Vagina (tissue), 2 donors: ENCODE measurements at regions of chr4 and their contacts with region 1.

Region 1: GRCh38 chr4:86472377-86473019 is 112.6 kb upstream of the MAPK10 start:
- DNase-seq: no peak
- H3K4me3 ChIP-seq: no peak overlapping the region
- H3K27ac ChIP-seq: peak overlapping the region; percentile 16
- H3K4me1 ChIP-seq: no peaks in the 10 kb centered on the region
- H3K27me3 ChIP-seq: no peaks in the 10 kb centered on the region
- CTCF ChIP-seq: no peak
- POLR2A ChIP-seq: no peak

Region 2: GRCh38 chr4:84792366-84793301 is 1679.9 kb before region 1 on chr4:
- intact Hi-C with region 1: loop called (anchors 5 kb)
- DNase-seq: no peak
- H3K4me3 ChIP-seq: no peak overlapping the region
- H3K27ac ChIP-seq: no peak overlapping the region
- H3K4me1 ChIP-seq: no peaks in the 10 kb centered on the region
- H3K27me3 ChIP-seq: no peaks in the 10 kb centered on the region
- CTCF ChIP-seq: no peak
- POLR2A ChIP-seq: no peak